ENCODE measurements at regions of chr22 and their contacts with region 1.

Region 1: DNA sequence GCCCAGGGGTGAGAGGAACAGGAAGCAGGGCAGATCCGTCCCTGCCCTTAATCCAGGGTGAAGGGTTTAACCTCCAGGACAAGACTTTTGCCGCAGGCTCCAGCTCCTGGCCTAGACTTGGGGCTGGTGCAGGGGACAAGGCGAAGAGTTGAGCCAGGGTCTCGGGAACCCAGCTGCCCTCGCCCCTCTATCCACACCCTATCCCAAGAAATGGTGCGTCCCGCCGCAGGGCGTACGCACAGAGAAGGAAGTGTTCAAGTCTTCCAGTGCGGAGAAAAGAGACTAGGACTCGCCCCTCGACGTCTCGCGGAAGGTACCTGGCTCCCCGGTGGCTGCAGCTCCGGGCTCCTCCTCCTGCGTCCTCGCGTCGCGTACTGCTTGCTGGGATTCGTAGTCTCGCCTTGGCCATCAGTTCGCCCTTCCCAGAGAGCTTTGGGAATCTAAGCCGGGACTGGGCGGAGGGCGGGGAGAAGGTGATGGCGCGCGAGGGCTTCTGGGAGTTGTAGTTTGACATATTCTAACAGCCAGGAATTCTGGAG is at the start of gene ZMAT5:
- DNase-seq: peak; percentile 95 to 96
- ATAC-seq: peak; percentile 93 to 97
- H3K4me3 ChIP-seq: peak within 1 kb of the TSS; percentile 84 to 96 (median 88)
- H3K27ac ChIP-seq: peak within 1 kb of the TSS; percentile 94 to 95 (median 95)
- H3K4me1 ChIP-seq: peaks cover 41 to 48% of the 10 kb centered on the region in 2 donors
- H3K27me3 ChIP-seq: no peaks in the 10 kb centered on the region
- CTCF ChIP-seq: no peak
- POLR2A ChIP-seq: peak in 1 of 2 donors; percentile 88
- total RNA-seq, gene ZMAT5: 23.8 to 38.6 (median 33.8) TPM

Region 2: GRCh38 chr22:29784451-29785361 is 18.0 kb after region 1 on chr22:
- in situ Hi-C with region 1: no loop called
- intact Hi-C with region 1: no loop called
- DNase-seq: no peak
- ATAC-seq: no peak
- H3K4me3 ChIP-seq: no peak overlapping the region
- H3K27ac ChIP-seq: peak overlapping the region in 2 of 4 donors; percentile 8 to 16
- H3K4me1 ChIP-seq: peaks cover 28 to 30% of the 10 kb centered on the region in 2 donors
- H3K27me3 ChIP-seq: no peaks in the 10 kb centered on the region
- CTCF ChIP-seq: no peak
- POLR2A ChIP-seq: no peak

Region 3: GRCh38 chr22:29798801-29799680 is 32.3 kb after region 1 on chr22:
- in situ Hi-C with region 1: no loop called
- intact Hi-C with region 1: loop called (anchors 2 kb)
- DNase-seq: peak; percentile 95 to 99
- ATAC-seq: peak; percentile 91 to 95
- H3K4me3 ChIP-seq: peak overlapping the region in 3 of 4 donors; percentile 16 to 35 (median 30)
- H3K27ac ChIP-seq: peak overlapping the region; percentile 88 to 94 (median 92)
- H3K4me1 ChIP-seq: peaks cover 53 to 60% of the 10 kb centered on the region in 2 donors
- H3K27me3 ChIP-seq: no peaks in the 10 kb centered on the region
- CTCF ChIP-seq: peak in 2 of 5 experiments; percentile 14 to 17
- POLR2A ChIP-seq: peak; percentile 19 to 28

Region 4: DNA sequence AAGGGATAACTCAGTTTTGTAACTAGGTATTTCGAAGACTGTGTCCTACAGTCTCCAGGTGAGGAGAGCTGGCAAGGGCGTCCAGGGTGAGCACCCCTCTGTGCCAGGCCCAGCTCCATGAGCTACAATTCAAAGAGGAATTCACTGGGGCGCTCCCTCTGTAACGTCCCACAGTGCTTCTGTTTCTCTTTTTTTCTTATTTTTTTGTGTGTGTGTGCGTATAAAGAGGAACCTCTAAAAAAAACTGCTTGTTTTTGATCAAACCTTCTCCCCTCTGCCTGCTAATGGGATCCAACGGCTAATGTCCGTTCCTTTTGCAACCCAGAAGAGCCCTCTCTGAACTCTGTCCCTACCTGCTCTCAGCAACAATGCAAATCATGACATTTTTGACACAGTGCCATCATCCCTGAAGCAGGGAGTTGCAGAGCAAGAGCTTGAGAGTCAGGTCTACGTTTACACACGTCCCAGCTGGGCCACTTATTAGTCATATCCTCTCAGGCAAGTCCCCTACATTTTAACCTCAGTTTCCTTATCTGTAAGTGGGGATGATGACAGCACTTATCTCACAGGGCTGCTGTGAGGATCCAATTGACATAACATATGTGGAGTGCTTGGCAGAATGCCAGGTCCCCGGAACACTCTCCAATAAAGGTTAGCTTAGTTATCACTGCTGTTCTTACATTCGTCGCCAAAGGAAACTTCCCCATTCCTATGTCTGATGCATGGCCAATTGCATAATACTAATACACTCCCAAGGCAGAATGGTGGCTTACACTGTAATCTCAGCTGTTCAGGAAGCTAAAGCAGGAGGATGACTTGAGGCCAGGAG is 54.5 kb after region 1 on chr22:
- in situ Hi-C with region 1: no loop called
- intact Hi-C with region 1: no loop called
- DNase-seq: no peak
- ATAC-seq: no peak
- H3K4me3 ChIP-seq: no peak overlapping the region
- H3K27ac ChIP-seq: peak overlapping the region in 3 of 4 donors; percentile 16 to 53 (median 52)
- H3K4me1 ChIP-seq: peaks cover 20 to 27% of the 10 kb centered on the region in 2 donors
- H3K27me3 ChIP-seq: no peaks in the 10 kb centered on the region
- CTCF ChIP-seq: no peak
- POLR2A ChIP-seq: no peak

Region 5: GRCh38 chr22:29883045-29883774 is 116.5 kb after region 1 on chr22 and contains the start of gene MTMR3:
- in situ Hi-C with region 1: no loop called
- intact Hi-C with region 1: loop called (anchors 5 kb)
- DNase-seq: peak; percentile 87 to 88
- ATAC-seq: peak; percentile 77 to 82
- H3K4me3 ChIP-seq: peak within 1 kb of the TSS; percentile 75 to 99 (median 92)
- H3K27ac ChIP-seq: peak within 1 kb of the TSS; percentile 97 to 100 (median 99)
- H3K4me1 ChIP-seq: peaks cover 42 to 43% of the 10 kb centered on the region in 2 donors
- H3K27me3 ChIP-seq: no peaks in the 10 kb centered on the region
- CTCF ChIP-seq: peak; percentile 17 to 78 (median 70)
- POLR2A ChIP-seq: peak; percentile 75 to 76
- total RNA-seq, gene MTMR3: 36.6 to 42.1 (median 37.1) TPM